Activated naive CD4-positive, alpha-beta T cell treated with anti-CD3 and anti-CD28 coated beads for 36 hours (primary cell): ENCODE measurements at regions of chr9 and their contacts with region 1.

Region 1: GRCh38 chr9:20242510-20243189 is 379.6 kb downstream of the MLLT3 start:
- DNase-seq: peak; percentile 52
- H3K4me3 Mint-ChIP-seq: no peak overlapping the region
- H3K27ac Mint-ChIP-seq: no peak overlapping the region
- H3K4me1 Mint-ChIP-seq: peaks cover 60% of the 10 kb centered on the region
- H3K27me3 Mint-ChIP-seq: no peaks in the 10 kb centered on the region

Region 2: DNA sequence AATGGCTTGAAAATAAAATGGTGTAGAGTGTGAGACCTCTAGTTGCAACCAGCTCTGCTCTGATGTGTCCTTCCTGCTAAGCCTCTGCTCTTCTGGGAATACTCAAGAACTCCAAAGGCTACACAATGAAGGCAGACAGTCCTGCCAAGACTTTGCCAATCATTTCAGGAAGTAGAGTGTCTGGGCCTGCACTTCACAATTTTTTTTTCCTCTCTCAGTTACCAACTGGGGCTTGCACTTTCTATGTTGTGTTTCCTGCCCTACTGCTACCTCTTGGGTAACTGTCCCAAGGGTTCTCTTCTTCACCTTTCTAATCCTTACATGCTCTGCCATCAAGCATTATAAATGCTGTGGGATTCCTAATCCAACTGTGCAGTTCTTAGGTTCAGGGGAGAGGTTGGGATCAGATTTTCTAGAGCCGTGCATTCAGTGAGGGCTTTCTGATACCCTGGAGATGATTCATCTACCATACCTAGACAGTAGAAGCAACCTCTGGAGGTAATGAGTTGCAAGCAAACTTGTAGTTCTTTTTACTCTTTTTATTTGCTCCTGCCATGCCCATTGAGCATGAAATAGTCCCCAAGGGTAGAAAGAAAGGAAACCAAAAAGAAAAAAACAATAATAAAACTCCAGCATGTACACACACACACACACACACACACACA is 13.8 kb after region 1 on chr9:
- CTCF ChIA-PET with region 1: interaction called, 3 read pairs
- intact Hi-C with region 1: loop called (anchors 1 kb)
- DNase-seq: no peak
- H3K4me3 Mint-ChIP-seq: no peak overlapping the region
- H3K27ac Mint-ChIP-seq: no peak overlapping the region
- H3K4me1 Mint-ChIP-seq: peaks cover 38% of the 10 kb centered on the region
- H3K27me3 Mint-ChIP-seq: no peaks in the 10 kb centered on the region